ENCODE measurements at regions of chr10 and their contacts with region 1.

Region 1: DNA sequence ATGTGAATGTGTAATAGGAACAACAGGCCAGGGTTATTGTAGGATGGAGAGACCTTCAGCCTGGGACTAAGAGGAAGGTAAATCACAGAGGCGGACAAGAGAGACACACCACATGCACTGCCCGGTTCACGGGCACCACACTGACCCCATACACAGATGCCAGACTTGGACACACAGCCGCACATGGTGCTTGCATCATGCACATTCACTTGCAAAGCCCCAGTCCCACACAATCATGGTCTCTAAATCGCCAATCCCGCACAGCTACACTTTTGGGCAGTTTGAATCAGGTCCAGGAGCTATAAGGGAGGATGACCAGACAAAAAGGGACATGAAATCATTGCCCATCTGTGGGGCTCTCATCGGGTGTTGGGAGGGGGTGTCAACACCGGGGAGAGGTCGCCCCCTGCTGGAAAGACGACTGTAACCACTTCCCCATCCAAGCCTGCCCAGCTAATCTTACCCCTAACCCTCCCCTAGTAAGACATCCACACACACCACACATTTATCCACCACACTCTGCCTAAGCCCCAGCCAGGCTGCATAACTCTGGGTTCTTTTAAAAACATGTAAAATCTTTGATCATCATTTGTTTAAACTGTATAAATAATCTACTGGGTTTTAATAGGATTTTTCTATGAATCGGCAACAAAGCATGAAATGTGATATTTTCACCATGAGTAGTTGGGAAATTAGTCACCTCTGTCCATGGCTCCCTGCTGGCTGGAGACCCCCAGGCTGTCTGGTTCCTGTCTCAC is 40.5 kb upstream of the SLF2 start:
- DNase-seq: peak; percentile 91
- H3K4me3 ChIP-seq: no peak overlapping the region; a peak in 1 of 4 replicates
- H3K27ac ChIP-seq: 0 out of 4 replicates have a peak overlapping the region, but pooled peaks of 1 of the 2 experiments have one; percentile 7
- H3K4me1 ChIP-seq: no peaks in the 10 kb centered on the region; a peak in 2 of 4 replicates
- H3K27me3 ChIP-seq: no peaks in the 10 kb centered on the region
- CTCF ChIP-seq: peak; percentile 68
- EP300 ChIP-seq: no peak
- RAD21 ChIP-seq: peak; percentile 80

Region 2: DNA sequence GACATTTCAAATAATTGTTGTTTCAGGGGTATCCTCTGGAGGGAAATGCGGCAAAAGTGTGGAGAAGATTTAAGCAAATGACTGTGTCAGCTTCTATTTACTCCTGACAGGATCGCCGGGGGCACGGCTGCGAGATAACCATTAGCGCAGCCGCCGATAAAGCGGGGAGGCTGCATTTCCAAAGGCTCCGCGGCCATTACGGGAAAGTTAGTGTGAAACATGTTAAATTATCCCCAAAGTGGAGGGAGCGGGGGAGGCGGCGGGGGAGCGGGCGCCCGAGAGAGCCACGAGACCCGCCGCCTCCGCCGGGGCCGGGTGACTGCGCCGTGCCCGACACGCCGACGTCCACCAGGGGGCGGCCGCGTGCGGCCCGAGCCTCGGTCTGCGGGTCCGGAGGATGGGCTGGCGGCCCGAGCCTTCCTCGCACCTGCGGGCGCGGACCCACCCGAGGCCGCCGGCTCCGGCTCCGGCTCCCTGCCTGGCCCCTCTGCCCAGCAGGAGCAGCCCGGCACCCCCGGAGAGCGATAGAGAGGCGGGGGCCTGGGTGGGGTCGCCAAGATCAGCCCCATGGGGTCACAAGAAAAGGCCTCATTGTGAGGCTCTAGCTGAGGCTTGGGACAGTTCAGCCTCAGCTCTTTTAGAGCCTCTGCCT is 201.3 kb before region 1 on chr10:
- CTCF ChIA-PET with region 1: interaction called, 21 read pairs
- POLR2A ChIA-PET with region 1: no interaction called
- DNase-seq: peak; percentile 92
- H3K4me3 ChIP-seq: peak overlapping the region; percentile 6 to 51; a peak in 1 of 4 replicates
- H3K27ac ChIP-seq: no peak overlapping the region
- H3K4me1 ChIP-seq: no peaks in the 10 kb centered on the region; a peak in 1 of 4 replicates
- H3K27me3 ChIP-seq: peaks cover 30% of the 10 kb centered on the region
- CTCF ChIP-seq: peak; percentile 70
- EP300 ChIP-seq: no peak
- RAD21 ChIP-seq: peak; percentile 54

Region 3: GRCh38 chr10:100728928-100729861 is 143.0 kb before region 1 on chr10:
- CTCF ChIA-PET with region 1: interaction called, 27 read pairs
- POLR2A ChIA-PET with region 1: no interaction called
- DNase-seq: peak; percentile 83
- H3K4me3 ChIP-seq: no peak overlapping the region; a peak in 1 of 4 replicates
- H3K27ac ChIP-seq: no peak overlapping the region
- H3K4me1 ChIP-seq: peaks cover 0 to 11% of the 10 kb centered on the region in 2 experiments; a peak in 1 of 4 replicates
- H3K27me3 ChIP-seq: peaks cover 91% of the 10 kb centered on the region
- CTCF ChIP-seq: peak; percentile 40
- EP300 ChIP-seq: no peak
- RAD21 ChIP-seq: peak; percentile 64

Region 4: GRCh38 chr10:100807241-100807951 is 64.8 kb before region 1 on chr10:
- CTCF ChIA-PET with region 1: interaction called, 11 read pairs
- POLR2A ChIA-PET with region 1: no interaction called
- DNase-seq: no peak
- H3K4me3 ChIP-seq: no peak overlapping the region
- H3K27ac ChIP-seq: no peak overlapping the region
- H3K4me1 ChIP-seq: peaks cover 0 to 44% of the 10 kb centered on the region in 2 experiments; a peak in 2 of 4 replicates
- H3K27me3 ChIP-seq: peaks cover 30% of the 10 kb centered on the region; the same call in 1 of the 2 replicates
- CTCF ChIP-seq: no peak
- EP300 ChIP-seq: no peak
- RAD21 ChIP-seq: no peak

Region 5: GRCh38 chr10:100827819-100828737 is 44.1 kb before region 1 on chr10:
- CTCF ChIA-PET with region 1: interaction called, 18 read pairs
- POLR2A ChIA-PET with region 1: no interaction called
- DNase-seq: peak; percentile 91
- H3K4me3 ChIP-seq: peak overlapping the region; percentile 38 to 39
- H3K27ac ChIP-seq: no peak overlapping the region
- H3K4me1 ChIP-seq: peaks cover 0 to 17% of the 10 kb centered on the region in 2 experiments; a peak in 1 of 4 replicates
- H3K27me3 ChIP-seq: peaks cover 77% of the 10 kb centered on the region
- CTCF ChIP-seq: no peak; the same call in 1 of the 2 replicates
- EP300 ChIP-seq: no peak
- RAD21 ChIP-seq: peak; percentile 64

Region 6: DNA sequence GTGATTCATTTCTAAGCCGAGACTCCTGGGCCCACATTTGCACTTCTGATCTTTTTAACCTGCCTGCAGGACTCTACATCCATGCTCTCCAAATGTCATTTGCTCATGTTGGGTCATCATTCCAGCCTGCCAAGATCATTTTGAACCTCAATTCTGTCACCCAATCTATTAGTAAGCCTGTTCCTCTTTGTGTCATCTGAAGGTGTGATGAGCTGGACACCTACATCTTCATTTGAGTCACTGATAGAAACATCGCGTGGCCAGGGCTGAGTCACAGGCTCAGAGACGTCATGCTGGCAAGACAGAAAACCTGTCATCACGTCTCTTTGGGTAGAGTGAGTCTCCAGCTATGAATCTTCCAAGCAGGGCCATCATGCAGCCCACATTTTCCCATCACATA is 24.8 kb before region 1 on chr10:
- CTCF ChIA-PET with region 1: interaction called, 21 read pairs
- POLR2A ChIA-PET with region 1: no interaction called
- DNase-seq: no peak
- H3K4me3 ChIP-seq: no peak overlapping the region
- H3K27ac ChIP-seq: no peak overlapping the region
- H3K4me1 ChIP-seq: no peaks in the 10 kb centered on the region
- H3K27me3 ChIP-seq: peaks cover 29% of the 10 kb centered on the region
- CTCF ChIP-seq: no peak
- EP300 ChIP-seq: no peak
- RAD21 ChIP-seq: no peak

Region 7: DNA sequence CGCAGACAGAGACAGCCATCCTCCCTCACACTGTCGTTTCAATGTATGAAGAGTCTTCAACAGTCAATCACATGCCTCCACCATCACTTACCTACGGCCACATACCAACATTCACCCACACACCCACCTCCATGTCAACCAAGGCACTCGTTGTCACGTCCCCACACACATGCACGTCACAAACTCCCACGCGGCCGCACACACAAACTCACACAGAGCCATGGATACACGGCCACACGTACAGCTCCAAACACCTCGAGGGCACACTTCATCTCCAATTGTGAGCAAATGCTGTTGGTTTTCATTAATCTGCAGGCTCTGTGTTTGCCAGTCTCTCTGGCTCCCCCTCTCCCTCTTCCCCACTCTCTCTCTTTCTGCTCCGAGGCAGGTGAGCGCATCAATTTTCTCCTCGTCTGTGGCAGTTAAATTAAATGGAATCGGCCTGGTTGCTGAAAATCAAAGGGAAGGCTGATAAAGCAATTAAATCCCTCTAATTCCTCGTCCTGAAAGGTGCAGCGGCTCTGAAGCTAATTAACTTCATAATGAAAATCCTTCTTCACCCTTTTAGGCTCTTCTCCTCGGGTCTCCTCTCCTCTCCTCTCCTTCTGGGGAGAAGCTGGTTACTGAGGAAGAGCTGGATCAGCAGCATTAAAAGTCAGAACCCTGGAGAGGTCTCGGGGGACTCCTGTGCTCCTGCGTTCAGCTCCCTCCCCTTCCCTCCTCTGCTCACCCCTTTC is 13.3 kb before region 1 on chr10:
- CTCF ChIA-PET with region 1: interaction called, 15 read pairs
- POLR2A ChIA-PET with region 1: no interaction called
- DNase-seq: no peak
- H3K4me3 ChIP-seq: no peak overlapping the region
- H3K27ac ChIP-seq: no peak overlapping the region
- H3K4me1 ChIP-seq: peaks cover 0 to 9% of the 10 kb centered on the region in 2 experiments; a peak in 1 of 4 replicates
- H3K27me3 ChIP-seq: peaks cover 67% of the 10 kb centered on the region
- CTCF ChIP-seq: no peak
- EP300 ChIP-seq: no peak
- RAD21 ChIP-seq: no peak